A549 (cell line): ENCODE measurements at regions of chr5 and their contacts with region 1.

Region 1: GRCh38 chr5:81165493-81166119 is 67.5 kb upstream of the CKMT2 start:
- DNase-seq: peak; percentile 69 to 71
- ATAC-seq: peak; percentile 90 to 98
- H3K4me3 ChIP-seq: no peak overlapping the region
- H3K27ac ChIP-seq: no peak overlapping the region
- H3K4me1 ChIP-seq: no peaks in the 10 kb centered on the region
- CTCF ChIP-seq: peak; percentile 74
- EP300 ChIP-seq: no peak
- POLR2A ChIP-seq: no peak
- RAD21 ChIP-seq: peak; percentile 80 to 83

Region 2: DNA sequence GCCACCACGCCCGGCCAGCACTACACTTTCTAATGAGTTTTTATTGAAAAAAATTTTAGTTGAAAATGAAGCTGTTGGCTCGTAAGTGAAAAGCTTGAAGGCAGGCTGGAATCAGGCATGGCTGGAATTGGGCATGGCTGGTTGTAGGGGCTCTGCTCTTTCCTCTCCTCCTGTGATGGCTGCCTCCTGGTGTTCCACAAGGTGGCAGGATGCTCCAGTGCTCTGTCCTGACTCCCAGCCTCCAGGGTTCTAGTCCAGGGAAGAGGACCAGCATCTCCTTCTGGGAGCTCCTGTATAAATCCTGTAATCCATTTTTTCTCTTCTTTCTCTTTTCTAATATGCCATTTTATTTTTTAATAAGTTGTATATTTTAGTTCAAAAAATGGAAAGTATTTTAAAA is 453.7 kb before region 1 on chr5:
- CTCF ChIA-PET with region 1: interaction called, 13 read pairs
- POLR2A ChIA-PET with region 1: no interaction called
- DNase-seq: peak; percentile 31 to 54
- ATAC-seq: peak; percentile 96 to 97
- H3K4me3 ChIP-seq: no peak overlapping the region
- H3K27ac ChIP-seq: no peak overlapping the region
- H3K4me1 ChIP-seq: 0 out of 3 replicates have a peak, but pooled peaks cover 4% of the 10 kb centered on the region
- CTCF ChIP-seq: peak; percentile 55
- EP300 ChIP-seq: no peak
- POLR2A ChIP-seq: no peak
- RAD21 ChIP-seq: peak; percentile 70 to 74

Region 3: GRCh38 chr5:81020478-81021174 is 145.0 kb before region 1 on chr5:
- CTCF ChIA-PET with region 1: no interaction called
- POLR2A ChIA-PET with region 1: no interaction called
- DNase-seq: no peak
- ATAC-seq: peak in 1 of 2 experiments; percentile 33; a peak in 2 of 6 replicates
- H3K4me3 ChIP-seq: no peak overlapping the region
- H3K27ac ChIP-seq: no peak overlapping the region
- H3K4me1 ChIP-seq: peaks cover 7% of the 10 kb centered on the region; the same call in 2 of the 3 replicates
- CTCF ChIP-seq: no peak
- EP300 ChIP-seq: no peak
- POLR2A ChIP-seq: no peak
- RAD21 ChIP-seq: no peak

Region 4: GRCh38 chr5:81177061-81177460 is 11.5 kb after region 1 on chr5:
- CTCF ChIA-PET with region 1: interaction called, 30 read pairs
- POLR2A ChIA-PET with region 1: no interaction called
- DNase-seq: no peak
- ATAC-seq: no peak
- H3K4me3 ChIP-seq: no peak overlapping the region
- H3K27ac ChIP-seq: no peak overlapping the region
- H3K4me1 ChIP-seq: no peaks in the 10 kb centered on the region
- CTCF ChIP-seq: no peak
- EP300 ChIP-seq: no peak
- POLR2A ChIP-seq: no peak
- RAD21 ChIP-seq: no peak

Region 5: DNA sequence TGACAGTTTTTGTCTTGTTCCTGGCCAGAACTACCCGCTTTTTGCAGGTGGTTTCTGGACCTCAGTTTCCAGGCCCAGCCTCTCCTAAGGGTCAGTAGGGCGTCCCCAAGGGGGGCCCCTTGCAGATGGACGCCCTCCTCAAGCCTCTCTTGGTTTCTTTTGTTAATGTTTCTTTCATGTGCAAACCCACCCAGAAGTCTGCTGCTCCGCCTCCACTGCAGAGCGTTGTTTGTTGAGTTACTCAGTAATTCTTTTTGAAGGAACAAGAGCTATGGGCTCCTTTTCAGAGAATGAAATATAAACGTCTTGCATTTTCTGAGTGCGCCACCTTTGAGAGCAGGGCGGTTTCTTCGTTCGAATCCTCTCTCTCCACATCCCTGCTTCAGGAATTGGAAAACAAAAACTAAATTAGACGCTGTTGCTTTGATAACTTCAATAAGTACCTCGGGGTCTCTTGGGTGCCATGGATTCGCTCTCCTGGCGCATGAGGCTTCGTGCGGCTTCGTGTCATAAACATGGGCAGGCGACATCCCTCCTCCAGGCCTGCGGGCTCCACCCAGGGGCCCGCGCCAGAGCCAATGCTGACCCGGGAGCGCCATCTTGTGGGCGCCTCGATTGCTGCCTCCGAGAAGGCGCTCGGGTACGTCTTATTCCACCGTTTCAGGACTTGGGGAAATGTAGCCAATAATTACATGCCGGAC is 29.2 kb after region 1 on chr5:
- CTCF ChIA-PET with region 1: interaction called, 11 read pairs
- POLR2A ChIA-PET with region 1: no interaction called
- DNase-seq: peak; percentile 79 to 88
- ATAC-seq: peak; percentile 98 to 100
- H3K4me3 ChIP-seq: no peak overlapping the region
- H3K27ac ChIP-seq: no peak overlapping the region
- H3K4me1 ChIP-seq: no peaks in the 10 kb centered on the region
- CTCF ChIP-seq: peak; percentile 93
- EP300 ChIP-seq: no peak
- POLR2A ChIP-seq: no peak
- RAD21 ChIP-seq: peak; percentile 90 to 94

Region 6: GRCh38 chr5:81247441-81247972 is 81.9 kb after region 1 on chr5:
- CTCF ChIA-PET with region 1: no interaction called
- POLR2A ChIA-PET with region 1: no interaction called
- DNase-seq: no peak
- ATAC-seq: no peak
- H3K4me3 ChIP-seq: no peak overlapping the region
- H3K27ac ChIP-seq: peak overlapping the region in 1 of 2 experiments; percentile 67; a peak in 1 of 6 replicates
- H3K4me1 ChIP-seq: peaks cover 29% of the 10 kb centered on the region
- CTCF ChIP-seq: no peak
- EP300 ChIP-seq: no peak
- POLR2A ChIP-seq: no peak
- RAD21 ChIP-seq: no peak